GM13977 (cell line): ENCODE measurements at regions of chr12 and their contacts with region 1.

Region 1: GRCh38 chr12:32302218-32303173 is 96.9 kb upstream of the FGD4 start:
- DNase-seq: peak; percentile 45
- CTCF ChIP-seq: peak; percentile 58

Region 2: DNA sequence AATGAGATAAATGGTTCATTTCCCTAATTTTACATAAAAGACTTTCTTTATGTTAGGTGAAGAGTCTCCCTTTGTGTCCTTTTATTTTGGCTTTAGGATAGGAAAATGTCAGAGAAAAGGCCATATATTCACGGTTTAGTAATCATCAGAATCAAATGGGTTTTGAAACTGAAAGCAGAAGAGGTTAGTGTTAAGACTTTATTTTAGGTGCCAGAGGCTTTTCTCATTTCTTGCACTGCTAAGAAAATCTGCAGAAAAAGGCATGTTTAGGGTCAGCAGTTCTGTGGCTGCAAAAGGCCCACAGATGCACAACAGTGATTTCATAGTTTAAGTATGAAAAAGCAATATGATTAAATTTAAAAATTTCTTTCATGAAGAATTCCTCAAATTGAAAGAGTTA is 896.2 kb before region 1 on chr12:
- in situ Hi-C with region 1: loop called (anchors 10 kb)
- DNase-seq: peak; percentile 60
- CTCF ChIP-seq: no peak

Region 3: GRCh38 chr12:31659087-31659933 is 643.2 kb before region 1 on chr12 and contains the start of gene ETFBKMT:
- in situ Hi-C with region 1: loop called (anchors 10 kb)
- DNase-seq: peak; percentile 91
- CTCF ChIP-seq: peak; percentile 18

Region 4: DNA sequence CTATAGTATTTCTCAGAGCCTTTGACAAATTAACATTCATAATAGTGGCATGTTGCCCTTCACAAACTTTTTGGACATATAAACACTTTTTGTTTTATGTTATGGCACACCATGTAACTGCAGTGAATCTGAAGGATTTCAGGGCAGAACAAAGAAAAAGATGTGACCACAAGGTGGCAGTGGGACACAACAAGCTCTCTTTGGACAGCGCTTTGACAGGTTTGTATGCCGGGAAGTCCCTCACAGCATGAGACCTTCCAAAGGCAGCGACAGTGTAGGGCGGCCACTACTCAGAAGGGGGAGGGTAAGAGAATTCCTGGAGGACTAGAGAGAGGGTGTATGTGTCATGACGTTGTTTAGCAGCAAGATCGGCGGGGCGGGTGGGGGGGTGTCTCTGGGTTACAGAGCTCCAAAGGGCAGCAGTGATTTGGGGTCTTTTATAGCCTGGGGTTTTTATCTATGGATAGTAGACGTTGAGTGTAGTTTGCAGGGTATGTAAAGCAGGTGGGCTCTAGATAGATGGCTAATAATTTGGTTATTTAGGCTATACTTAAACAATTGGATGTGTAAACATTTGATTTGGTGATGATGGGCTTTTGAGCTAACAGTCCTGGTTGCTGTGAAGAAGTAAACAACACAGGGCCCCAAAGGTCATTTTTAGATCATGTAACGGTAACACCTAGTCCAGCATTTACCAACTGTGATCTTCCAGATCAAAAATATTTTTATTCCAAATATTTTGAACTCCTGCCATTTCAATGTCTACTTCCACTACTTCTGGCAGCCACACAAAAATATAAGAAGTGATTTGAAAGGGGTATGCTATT is 620.1 kb before region 1 on chr12:
- in situ Hi-C with region 1: loop called (anchors 10 kb)
- DNase-seq: peak; percentile 72
- CTCF ChIP-seq: peak; percentile 79

Region 5: DNA sequence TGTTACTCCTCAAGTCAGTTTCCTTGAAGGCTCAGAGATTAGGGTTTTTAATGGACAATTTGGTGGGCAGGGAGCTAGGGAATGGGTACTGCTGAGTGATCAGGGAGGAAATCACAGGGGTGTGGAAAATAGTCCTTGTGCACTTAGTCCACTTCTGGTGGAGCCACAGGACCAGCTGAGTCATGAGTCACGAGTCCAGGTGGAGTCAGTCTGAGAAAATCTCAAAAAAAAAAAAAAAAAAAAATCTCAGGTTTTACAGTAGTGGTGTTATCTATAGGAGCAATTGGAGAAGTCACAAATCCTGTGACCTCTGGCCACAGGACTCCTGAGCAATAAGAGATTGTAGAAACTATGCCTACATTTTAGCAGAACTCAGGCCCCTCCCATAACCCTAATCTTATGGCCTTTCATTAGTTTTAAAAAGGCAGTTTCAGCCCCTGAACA is 545.5 kb before region 1 on chr12:
- in situ Hi-C with region 1: loop called (anchors 10 kb)
- DNase-seq: no peak
- CTCF ChIP-seq: no peak

Region 6: DNA sequence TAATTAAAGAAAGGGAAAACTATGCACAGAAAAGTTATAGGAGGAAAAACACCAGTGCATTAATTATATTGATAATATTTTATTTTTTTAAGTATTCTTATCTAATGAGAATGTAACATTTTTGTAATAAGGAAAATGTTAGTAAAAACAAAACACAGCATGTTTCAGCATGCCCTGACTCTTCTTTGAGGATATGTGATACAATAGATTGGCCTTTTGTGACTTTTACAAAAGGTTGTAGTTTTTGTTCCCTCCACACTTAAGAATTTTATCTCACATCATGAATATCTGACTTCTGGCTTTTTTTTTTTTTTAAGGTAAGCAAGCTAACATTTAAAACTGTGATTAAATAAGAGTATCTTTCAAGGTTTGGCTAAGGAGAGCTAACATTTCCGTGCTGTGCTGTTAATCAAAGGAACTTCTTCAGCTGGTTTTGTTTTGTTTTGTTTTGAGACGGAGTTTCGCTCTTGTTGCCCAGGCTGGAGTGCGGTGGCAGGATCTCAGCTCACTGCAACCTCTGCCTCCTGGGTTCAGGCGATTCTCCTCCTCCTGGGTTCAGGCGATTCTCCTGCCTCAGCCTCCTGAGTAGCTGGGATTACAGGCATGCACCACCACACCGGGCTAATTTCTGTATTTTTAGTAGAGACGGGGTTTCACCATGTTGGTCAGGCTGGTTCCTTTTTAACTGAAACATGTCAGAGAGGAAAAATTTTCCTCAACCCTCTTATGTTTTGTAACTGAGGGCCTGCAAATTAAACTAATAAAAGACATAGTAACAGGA is 374.1 kb before region 1 on chr12:
- in situ Hi-C with region 1: no loop called
- DNase-seq: no peak
- CTCF ChIP-seq: no peak

Region 7: GRCh38 chr12:32051559-32052414 is 250.7 kb before region 1 on chr12:
- in situ Hi-C with region 1: loop called (anchors 25 kb)
- DNase-seq: no peak
- CTCF ChIP-seq: no peak